ENCODE measurements at regions of chr1 and their contacts with region 1.

Region 1: GRCh38 chr1:41432481-41433280 is 51.8 kb downstream of the EDN2 start:
- DNase-seq: peak; percentile 28 to 88 (median 81)
- H3K4me3 ChIP-seq: peak overlapping the region in 9 of 59 donors; percentile 15 to 36 (median 19)
- H3K27ac ChIP-seq: peak overlapping the region in 40 of 59 donors; percentile 1 to 79 (median 46)
- H3K27me3 ChIP-seq: peaks cover 0 to 12% (median 0%) of the 10 kb centered on the region in 45 donors
- CTCF ChIP-seq: peak; percentile 47 to 97 (median 90)

Region 2: GRCh38 chr1:41268154-41268770 is 164.4 kb before region 1 on chr1:
- intact Hi-C with region 1: loop called (anchors 1 to 5 kb)
- DNase-seq: peak; percentile 67 to 89 (median 80)
- H3K4me3 ChIP-seq: peak overlapping the region in 1 of 59 donors; percentile 17
- H3K27ac ChIP-seq: peak overlapping the region in 17 of 59 donors; percentile 3 to 60 (median 21)
- H3K27me3 ChIP-seq: no peaks in the 10 kb centered on the region
- CTCF ChIP-seq: peak; percentile 95 to 100 (median 99)

Region 3: DNA sequence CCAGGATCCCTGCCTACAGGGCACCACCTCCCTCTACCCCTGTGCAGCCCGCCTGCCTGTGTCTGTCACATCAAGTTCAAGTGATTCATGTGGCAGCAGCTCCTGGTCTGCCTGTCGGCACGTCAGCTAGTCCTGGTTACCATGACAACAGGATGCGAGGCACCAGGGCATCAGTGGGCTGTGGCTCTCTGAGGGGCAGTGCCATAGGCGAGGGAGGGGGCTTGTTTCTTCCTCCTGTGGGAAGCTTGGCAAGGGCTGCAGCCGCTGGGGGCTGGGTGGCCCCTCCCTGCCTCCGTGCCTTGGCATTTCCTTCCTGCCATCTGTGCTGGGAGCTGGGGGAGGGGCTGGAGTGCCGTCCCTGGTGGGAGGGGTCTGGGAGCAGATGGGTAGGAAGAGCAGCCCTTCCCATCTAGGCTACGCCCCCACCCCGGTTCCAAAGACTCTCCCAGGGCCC is 28.3 kb before region 1 on chr1:
- intact Hi-C with region 1: no loop called
- DNase-seq: peak in 8 of 10 donors; percentile 33 to 74 (median 54)
- H3K4me3 ChIP-seq: peak overlapping the region in 15 of 59 donors; percentile 1 to 45 (median 18)
- H3K27ac ChIP-seq: peak overlapping the region in 1 of 59 donors; percentile 18
- H3K27me3 ChIP-seq: peaks cover 0 to 9% (median 0%) of the 10 kb centered on the region in 45 donors
- CTCF ChIP-seq: no peak

Region 4: DNA sequence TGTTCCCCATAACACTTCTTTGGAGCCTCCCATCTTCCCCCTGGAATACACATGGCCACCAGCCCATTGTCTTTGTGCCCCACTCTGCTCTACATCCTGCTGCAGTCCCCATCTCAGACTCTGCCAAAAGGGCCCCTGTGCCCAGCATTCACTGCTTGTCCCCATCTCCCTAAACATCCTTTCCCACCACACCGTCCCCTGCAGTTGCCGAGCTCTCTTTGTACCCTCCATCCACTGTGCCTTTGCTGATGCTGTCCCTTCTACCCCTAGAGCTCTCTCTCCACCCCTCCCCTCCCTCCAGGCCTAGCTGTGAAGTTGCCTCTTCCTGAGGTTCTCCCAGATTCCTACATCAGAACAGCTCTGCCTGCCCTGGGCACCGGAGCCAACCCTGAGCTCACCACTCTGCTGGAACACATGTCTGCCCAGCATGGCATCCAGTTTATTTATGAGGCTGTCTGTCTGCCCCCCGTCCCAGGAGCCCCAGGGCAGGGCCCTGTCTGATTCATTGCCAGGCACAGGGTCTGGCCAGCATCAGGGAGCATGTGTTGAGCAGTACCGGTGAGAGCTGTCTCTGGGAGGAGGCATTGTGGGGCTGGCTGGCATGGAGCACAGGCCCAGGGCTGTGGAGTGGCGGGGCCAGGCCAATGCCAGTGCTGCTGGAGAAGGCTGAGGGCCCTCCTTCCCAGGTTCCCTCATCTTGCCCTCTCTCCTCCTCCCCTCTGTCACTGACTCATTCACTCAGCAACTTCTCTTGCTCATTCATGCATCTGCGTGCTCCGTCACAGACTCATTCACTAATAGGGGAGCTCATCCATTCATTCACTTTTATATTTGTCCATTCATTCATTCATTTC is 23.0 kb after region 1 on chr1:
- intact Hi-C with region 1: loop called (anchors 1 kb)
- DNase-seq: peak in 4 of 10 donors; percentile 19 to 85 (median 32)
- H3K4me3 ChIP-seq: no peak overlapping the region
- H3K27ac ChIP-seq: peak overlapping the region in 17 of 59 donors; percentile 0 to 74 (median 26)
- H3K27me3 ChIP-seq: no peaks in the 10 kb centered on the region
- CTCF ChIP-seq: no peak

Measured in dorsolateral prefrontal cortex (tissue), 120 donors.